CD4-positive, alpha-beta T cell (primary cell): ENCODE measurements at regions of chr20 and their contacts with region 1.

Region 1: GRCh38 chr20:34312544-34313217 is 9.5 kb upstream of the AHCY start:
- DNase-seq: peak; percentile 77 to 92 (median 84)
- ATAC-seq: peak; percentile 100
- H3K4me3 ChIP-seq: no peak overlapping the region
- H3K4me3 Mint-ChIP-seq: no peak overlapping the region
- H3K27ac ChIP-seq: no peak overlapping the region
- H3K27ac Mint-ChIP-seq: no peak overlapping the region
- H3K4me1 ChIP-seq: peaks cover 20% of the 10 kb centered on the region
- H3K4me1 Mint-ChIP-seq: peaks cover 6% of the 10 kb centered on the region
- H3K27me3 ChIP-seq: peaks cover 14 to 20% of the 10 kb centered on the region in 2 experiments
- H3K27me3 Mint-ChIP-seq: peaks cover 24% of the 10 kb centered on the region
- CTCF ChIP-seq: peak; percentile 100

Region 2: GRCh38 chr20:34363062-34363464 is 50.4 kb after region 1 on chr20 and contains the start of gene ITCH:
- CTCF ChIA-PET with region 1: interaction called, 26 read pairs
- POLR2A ChIA-PET with region 1: interaction called, 5 read pairs
- intact Hi-C with region 1: no loop called
- DNase-seq: peak; percentile 86 to 96 (median 89)
- ATAC-seq: peak; percentile 100
- H3K4me3 ChIP-seq: peak within 1 kb of the TSS; percentile 98
- H3K4me3 Mint-ChIP-seq: peak within 1 kb of the TSS; percentile 100
- H3K27ac ChIP-seq: peak within 1 kb of the TSS; percentile 72 to 78
- H3K27ac Mint-ChIP-seq: peak within 1 kb of the TSS; percentile 95
- H3K4me1 ChIP-seq: peaks cover 47% of the 10 kb centered on the region
- H3K4me1 Mint-ChIP-seq: peaks cover 37% of the 10 kb centered on the region
- H3K27me3 ChIP-seq: no peaks in the 10 kb centered on the region
- H3K27me3 Mint-ChIP-seq: no peaks in the 10 kb centered on the region
- CTCF ChIP-seq: no peak
- total RNA-seq, gene ITCH: 44.2 to 47.0 TPM

Region 3: DNA sequence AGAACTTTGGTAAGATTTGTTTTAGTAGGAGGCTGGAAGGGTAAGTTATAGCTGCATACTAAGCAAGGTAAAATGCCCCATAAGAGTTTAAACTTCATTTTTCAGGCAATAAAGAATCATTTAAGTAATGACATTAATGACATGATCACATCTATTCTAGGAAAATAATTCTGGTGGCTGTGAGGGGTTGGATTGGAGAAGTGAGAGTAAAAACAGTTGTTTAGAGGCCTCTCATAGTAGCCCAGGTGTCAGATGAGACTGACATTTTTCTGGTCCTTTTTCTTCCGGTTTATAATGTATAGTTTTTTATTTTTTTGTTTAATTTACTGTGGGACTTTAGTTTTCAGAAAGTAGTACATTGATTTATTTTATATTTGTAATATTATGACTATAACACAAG is 91.2 kb after region 1 on chr20:
- CTCF ChIA-PET with region 1: interaction called, 12 read pairs
- POLR2A ChIA-PET with region 1: no interaction called
- intact Hi-C with region 1: loop called in 1 of 2 experiments (anchors 2 kb)
- DNase-seq: no peak
- ATAC-seq: no peak
- H3K4me3 ChIP-seq: no peak overlapping the region
- H3K4me3 Mint-ChIP-seq: peak overlapping the region; percentile 27
- H3K27ac ChIP-seq: no peak overlapping the region
- H3K27ac Mint-ChIP-seq: peak overlapping the region; percentile 47
- H3K4me1 ChIP-seq: peaks cover 17% of the 10 kb centered on the region
- H3K4me1 Mint-ChIP-seq: peaks cover 63% of the 10 kb centered on the region
- H3K27me3 ChIP-seq: no peaks in the 10 kb centered on the region
- H3K27me3 Mint-ChIP-seq: no peaks in the 10 kb centered on the region
- CTCF ChIP-seq: no peak

Region 4: DNA sequence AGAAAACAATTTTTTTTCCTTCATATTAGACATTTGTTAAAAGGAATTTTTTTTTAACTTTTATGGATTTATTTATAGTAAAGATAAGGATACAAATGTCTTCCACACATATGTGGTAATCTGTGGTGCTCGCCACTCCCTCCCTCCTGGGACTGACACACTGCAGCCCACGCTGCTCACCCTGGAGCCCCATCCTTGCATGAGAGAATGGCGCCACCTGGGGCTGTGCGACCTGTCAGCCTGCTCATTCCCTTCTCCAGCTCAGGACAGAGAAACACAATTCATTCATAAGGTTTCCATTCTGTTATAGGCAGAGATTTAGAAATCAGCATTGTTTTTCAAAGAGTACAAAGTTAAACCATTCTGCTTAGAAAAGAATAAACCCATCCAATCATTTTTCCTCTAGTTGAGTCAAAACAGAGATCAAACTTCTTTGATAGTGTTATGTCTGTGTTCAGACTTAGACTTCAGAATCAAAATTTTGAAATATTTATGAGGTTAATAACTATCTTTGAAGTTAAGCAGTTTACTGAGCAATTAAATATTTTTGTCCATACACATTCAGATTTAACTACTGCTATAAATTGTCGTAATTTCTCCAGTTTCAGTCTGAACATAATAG is 160.7 kb after region 1 on chr20:
- CTCF ChIA-PET with region 1: interaction called, 6 read pairs
- POLR2A ChIA-PET with region 1: interaction called, 3 read pairs
- intact Hi-C with region 1: loop called (anchors 1 to 5 kb)
- DNase-seq: peak in 10 of 14 experiments; percentile 3 to 41 (median 19)
- ATAC-seq: no peak
- H3K4me3 ChIP-seq: no peak overlapping the region
- H3K4me3 Mint-ChIP-seq: no peak overlapping the region
- H3K27ac ChIP-seq: no peak overlapping the region
- H3K27ac Mint-ChIP-seq: no peak overlapping the region
- H3K4me1 ChIP-seq: no peaks in the 10 kb centered on the region
- H3K4me1 Mint-ChIP-seq: peaks cover 6% of the 10 kb centered on the region
- H3K27me3 ChIP-seq: no peaks in the 10 kb centered on the region
- H3K27me3 Mint-ChIP-seq: no peaks in the 10 kb centered on the region
- CTCF ChIP-seq: peak; percentile 9

Region 5: DNA sequence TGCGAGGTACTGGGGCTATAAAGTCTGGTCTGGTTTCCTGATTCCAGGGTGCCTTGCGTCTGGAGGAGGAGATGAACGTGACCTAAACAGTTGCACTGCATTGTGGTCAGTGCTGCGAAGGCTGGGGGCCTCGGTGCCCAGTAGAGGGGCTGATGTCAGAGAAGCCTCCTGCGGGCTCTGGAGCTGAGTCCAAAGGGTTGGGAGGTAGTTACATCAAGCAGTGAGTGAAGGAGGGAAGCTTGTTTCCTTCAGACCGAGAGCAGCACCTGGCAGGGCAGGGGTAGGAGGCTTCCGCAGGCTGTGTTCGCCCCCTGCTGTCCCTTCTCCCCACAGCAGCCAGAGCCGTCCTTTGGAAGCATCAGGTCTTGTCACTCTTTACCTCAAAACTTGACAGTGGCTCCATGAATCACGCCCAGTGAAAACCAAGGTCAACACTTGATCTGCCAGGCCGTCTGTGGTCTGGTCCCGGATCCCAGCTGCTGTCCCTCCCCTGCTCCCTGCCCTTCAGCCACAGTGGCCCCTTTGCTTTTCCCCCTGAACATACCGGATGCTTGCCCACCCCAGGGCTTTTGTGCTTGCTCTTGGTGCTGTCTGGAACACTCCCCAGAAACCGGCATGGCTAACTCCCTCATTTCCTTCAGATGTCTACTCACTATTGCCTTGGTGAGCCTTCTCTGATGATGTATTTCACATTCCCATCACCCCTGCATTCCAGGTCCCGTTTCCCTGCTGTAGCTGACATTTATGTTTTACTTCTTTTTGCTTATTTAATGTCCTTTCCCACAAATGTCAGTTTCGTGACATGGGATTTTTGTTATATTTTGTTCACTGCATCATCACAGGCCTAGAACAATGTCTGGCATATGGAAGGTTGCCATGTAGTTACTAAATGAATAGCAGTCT is 210.5 kb after region 1 on chr20:
- CTCF ChIA-PET with region 1: interaction called, 38 read pairs
- POLR2A ChIA-PET with region 1: interaction called, 4 read pairs
- intact Hi-C with region 1: loop called (anchors 1 to 2 kb)
- DNase-seq: peak; percentile 26 to 73 (median 44)
- ATAC-seq: peak; percentile 95
- H3K4me3 ChIP-seq: no peak overlapping the region
- H3K4me3 Mint-ChIP-seq: no peak overlapping the region
- H3K27ac ChIP-seq: no peak overlapping the region
- H3K27ac Mint-ChIP-seq: peak overlapping the region; percentile 12
- H3K4me1 ChIP-seq: peaks cover 22% of the 10 kb centered on the region
- H3K4me1 Mint-ChIP-seq: peaks cover 59% of the 10 kb centered on the region
- H3K27me3 ChIP-seq: no peaks in the 10 kb centered on the region
- H3K27me3 Mint-ChIP-seq: no peaks in the 10 kb centered on the region
- CTCF ChIP-seq: peak; percentile 52

Region 6: GRCh38 chr20:34768096-34768495 is 455.4 kb after region 1 on chr20:
- CTCF ChIA-PET with region 1: interaction called, 73 read pairs
- POLR2A ChIA-PET with region 1: interaction called, 10 read pairs
- intact Hi-C with region 1: loop called (anchors 1 kb)
- DNase-seq: no peak
- ATAC-seq: no peak
- H3K4me3 ChIP-seq: no peak overlapping the region
- H3K4me3 Mint-ChIP-seq: no peak overlapping the region
- H3K27ac ChIP-seq: no peak overlapping the region
- H3K27ac Mint-ChIP-seq: no peak overlapping the region
- H3K4me1 ChIP-seq: no peaks in the 10 kb centered on the region
- H3K4me1 Mint-ChIP-seq: no peaks in the 10 kb centered on the region
- H3K27me3 ChIP-seq: no peaks in the 10 kb centered on the region
- H3K27me3 Mint-ChIP-seq: no peaks in the 10 kb centered on the region
- CTCF ChIP-seq: no peak